CD8-positive, alpha-beta memory T cell (primary cell): ENCODE measurements at regions of chr15 and their contacts with region 1.

Region 1: GRCh38 chr15:84588053-84588874 is 12.5 kb upstream of the ZSCAN2 start:
- DNase-seq: peak; percentile 74 to 87 (median 77)
- H3K4me3 ChIP-seq: peak overlapping the region; percentile 37
- H3K4me3 Mint-ChIP-seq: peak overlapping the region in 5 of 7 donors; percentile 33 to 73 (median 70)
- H3K27ac ChIP-seq: no peak overlapping the region
- H3K27ac Mint-ChIP-seq: no peak overlapping the region
- H3K4me1 ChIP-seq: peaks cover 7% of the 10 kb centered on the region
- H3K4me1 Mint-ChIP-seq: peaks cover 5 to 6% (median 6%) of the 10 kb centered on the region in 3 donors
- H3K27me3 ChIP-seq: no peaks in the 10 kb centered on the region
- H3K27me3 Mint-ChIP-seq: peaks cover 0 to 21% of the 10 kb centered on the region in 2 donors

Region 2: GRCh38 chr15:84570164-84570735 is 18.0 kb before region 1 on chr15:
- CTCF ChIA-PET with region 1: interaction called, 21 read pairs
- POLR2A ChIA-PET with region 1: no interaction called
- DNase-seq: peak; percentile 37 to 69 (median 42)
- H3K4me3 ChIP-seq: peak overlapping the region; percentile 66
- H3K4me3 Mint-ChIP-seq: peak overlapping the region; percentile 85 to 93 (median 88)
- H3K27ac ChIP-seq: peak overlapping the region; percentile 67
- H3K27ac Mint-ChIP-seq: peak overlapping the region; percentile 72 to 97 (median 86)
- H3K4me1 ChIP-seq: peaks cover 4% of the 10 kb centered on the region
- H3K4me1 Mint-ChIP-seq: peaks cover 9 to 23% (median 13%) of the 10 kb centered on the region in 3 donors
- H3K27me3 ChIP-seq: no peaks in the 10 kb centered on the region
- H3K27me3 Mint-ChIP-seq: no peaks in the 10 kb centered on the region

Region 3: DNA sequence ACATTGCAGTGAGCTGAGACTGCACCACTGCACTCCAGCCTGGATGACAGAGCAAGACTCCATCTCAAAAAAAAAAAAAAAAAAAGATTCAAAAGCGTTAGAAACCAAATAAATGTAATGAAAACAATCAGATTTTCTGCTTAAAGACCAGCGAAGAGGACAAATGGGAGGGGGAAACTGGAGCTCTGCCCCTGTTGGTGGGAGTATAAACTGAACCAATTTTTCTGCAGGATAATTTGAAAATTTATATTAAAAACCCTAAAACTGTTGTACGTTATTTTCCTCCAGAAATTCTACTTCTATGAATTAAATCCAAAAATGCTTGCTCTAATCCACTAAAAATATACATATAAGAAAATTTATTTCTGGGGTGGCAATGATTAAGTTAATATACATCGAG is 12.8 kb before region 1 on chr15:
- CTCF ChIA-PET with region 1: interaction called, 21 read pairs
- POLR2A ChIA-PET with region 1: no interaction called
- DNase-seq: no peak
- H3K4me3 ChIP-seq: no peak overlapping the region
- H3K4me3 Mint-ChIP-seq: no peak overlapping the region
- H3K27ac ChIP-seq: no peak overlapping the region
- H3K27ac Mint-ChIP-seq: no peak overlapping the region
- H3K4me1 ChIP-seq: no peaks in the 10 kb centered on the region
- H3K4me1 Mint-ChIP-seq: peaks cover 2 to 8% (median 4%) of the 10 kb centered on the region in 3 donors
- H3K27me3 ChIP-seq: no peaks in the 10 kb centered on the region
- H3K27me3 Mint-ChIP-seq: no peaks in the 10 kb centered on the region

Region 4: GRCh38 chr15:84685304-84685703 is 97.0 kb after region 1 on chr15:
- CTCF ChIA-PET with region 1: no interaction called
- POLR2A ChIA-PET with region 1: no interaction called
- DNase-seq: no peak
- H3K4me3 ChIP-seq: no peak overlapping the region
- H3K4me3 Mint-ChIP-seq: no peak overlapping the region
- H3K27ac ChIP-seq: no peak overlapping the region
- H3K27ac Mint-ChIP-seq: peak overlapping the region in 2 of 8 donors; percentile 60 to 78
- H3K4me1 ChIP-seq: no peaks in the 10 kb centered on the region
- H3K4me1 Mint-ChIP-seq: peaks cover 12 to 22% (median 17%) of the 10 kb centered on the region in 3 donors
- H3K27me3 ChIP-seq: no peaks in the 10 kb centered on the region
- H3K27me3 Mint-ChIP-seq: peaks cover 0 to 2% of the 10 kb centered on the region in 2 donors

Region 5: GRCh38 chr15:84879088-84879792 is 291.0 kb after region 1 on chr15:
- CTCF ChIA-PET with region 1: interaction called, 10 read pairs
- POLR2A ChIA-PET with region 1: no interaction called
- DNase-seq: no peak
- H3K4me3 ChIP-seq: no peak overlapping the region
- H3K4me3 Mint-ChIP-seq: no peak overlapping the region
- H3K27ac ChIP-seq: no peak overlapping the region
- H3K27ac Mint-ChIP-seq: no peak overlapping the region
- H3K4me1 ChIP-seq: no peaks in the 10 kb centered on the region
- H3K4me1 Mint-ChIP-seq: no peaks in the 10 kb centered on the region
- H3K27me3 ChIP-seq: no peaks in the 10 kb centered on the region
- H3K27me3 Mint-ChIP-seq: peaks cover 1 to 12% of the 10 kb centered on the region in 2 donors

Region 6: DNA sequence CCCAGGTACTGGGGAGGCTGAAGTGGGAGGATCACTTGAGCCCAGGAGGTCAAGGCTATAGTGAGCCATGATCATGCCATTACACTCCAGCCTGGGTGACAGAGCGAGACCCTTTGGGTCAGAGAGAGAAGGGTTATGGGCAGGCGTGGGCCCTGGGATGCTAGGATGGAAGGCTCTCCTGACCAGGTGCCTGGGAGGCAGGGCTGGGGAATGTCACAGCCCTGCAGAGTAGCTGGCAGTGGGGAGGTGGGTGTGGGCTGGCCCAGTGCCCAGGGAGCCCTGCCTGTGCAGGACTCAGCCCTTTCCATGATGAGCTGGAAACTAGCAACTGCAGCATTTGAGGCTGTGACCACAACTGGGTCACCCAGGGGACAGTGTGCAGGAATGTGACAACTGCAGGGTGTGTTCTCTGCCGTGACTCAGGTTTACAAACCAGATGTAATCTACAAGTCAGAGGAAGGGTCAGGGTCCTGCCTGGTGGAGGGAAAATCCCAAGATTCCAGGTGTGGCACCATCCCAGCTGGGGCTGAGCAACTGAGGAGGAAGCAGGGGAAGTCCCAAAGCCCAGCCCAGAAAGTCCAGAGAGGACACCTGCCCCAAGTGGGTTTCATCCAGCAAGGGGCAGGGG is 341.6 kb after region 1 on chr15:
- CTCF ChIA-PET with region 1: interaction called, 30 read pairs
- POLR2A ChIA-PET with region 1: no interaction called
- DNase-seq: no peak
- H3K4me3 ChIP-seq: no peak overlapping the region
- H3K4me3 Mint-ChIP-seq: no peak overlapping the region
- H3K27ac ChIP-seq: peak overlapping the region; percentile 9
- H3K27ac Mint-ChIP-seq: peak overlapping the region in 2 of 8 donors; percentile 29 to 63
- H3K4me1 ChIP-seq: peaks cover 3% of the 10 kb centered on the region
- H3K4me1 Mint-ChIP-seq: peaks cover 4 to 6% (median 5%) of the 10 kb centered on the region in 3 donors
- H3K27me3 ChIP-seq: no peaks in the 10 kb centered on the region
- H3K27me3 Mint-ChIP-seq: no peaks in the 10 kb centered on the region